Endothelial cell of umbilical vein (primary cell): ENCODE measurements at regions of chr10 and their contacts with region 1.

Region 1: DNA sequence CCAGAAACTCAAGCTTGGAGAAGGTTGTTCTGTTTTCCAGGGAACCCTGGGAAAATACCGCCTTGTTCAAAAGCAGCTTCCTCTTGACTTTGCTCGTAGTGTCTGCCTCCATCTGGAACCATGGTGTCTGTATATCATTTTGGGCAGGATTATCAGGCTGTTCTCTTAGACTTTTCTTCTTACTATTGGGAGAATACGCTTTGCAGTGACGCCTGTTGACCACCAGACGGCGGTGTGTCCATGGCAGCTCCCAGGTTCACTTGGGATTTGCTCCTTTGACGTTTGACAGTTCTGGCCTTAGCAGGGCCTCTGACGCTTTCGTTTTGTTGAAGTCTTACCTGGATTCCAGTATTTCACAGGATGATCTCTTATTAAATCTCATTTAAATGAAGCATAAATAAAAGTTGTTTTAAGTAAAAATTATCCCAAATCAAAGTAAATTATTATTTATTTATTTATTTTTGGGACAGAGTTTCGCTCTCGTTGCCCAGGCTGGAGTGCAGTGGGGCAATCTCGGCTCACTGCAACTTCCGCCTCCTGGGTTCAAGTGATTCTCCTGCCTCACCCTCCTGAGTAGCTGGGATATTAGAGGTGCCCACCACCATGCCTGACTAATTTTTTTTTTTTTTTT is 41.8 kb upstream of the GJD4 start:
- DNase-seq: peak; percentile 78
- H3K4me3 ChIP-seq: no peak overlapping the region
- H3K27ac ChIP-seq: no peak overlapping the region
- H3K4me1 ChIP-seq: peaks cover 12% of the 10 kb centered on the region
- H3K27me3 ChIP-seq: no peaks in the 10 kb centered on the region
- CTCF ChIP-seq: peak; percentile 97 to 100
- POLR2A ChIP-seq: no peak

Region 2: DNA sequence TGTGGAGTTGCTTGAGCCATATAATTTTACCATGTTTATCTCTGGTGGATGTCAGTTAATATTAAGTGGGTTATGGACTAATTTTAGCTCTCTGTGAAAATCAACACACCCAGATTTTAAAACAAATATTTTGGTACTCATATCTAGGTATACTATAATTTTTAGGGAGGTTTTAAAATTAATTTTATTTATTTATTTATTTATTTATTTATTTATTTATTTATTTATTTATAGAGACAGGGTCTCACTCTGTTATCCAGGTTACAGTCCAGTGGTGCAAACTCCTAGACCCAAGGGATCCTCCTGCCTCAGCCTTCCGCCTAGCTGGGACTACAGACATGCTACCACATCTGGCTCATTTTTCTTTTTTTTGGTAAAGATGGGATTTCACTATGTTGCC is 444.0 kb before region 1 on chr10:
- CTCF ChIA-PET with region 1: interaction called, 32 read pairs
- POLR2A ChIA-PET with region 1: no interaction called
- dilution Hi-C with region 1: no loop called
- intact Hi-C with region 1: loop called (anchors 10 kb)
- DNase-seq: no peak
- H3K4me3 ChIP-seq: no peak overlapping the region
- H3K27ac ChIP-seq: no peak overlapping the region
- H3K4me1 ChIP-seq: no peaks in the 10 kb centered on the region
- H3K27me3 ChIP-seq: peaks cover 0 to 2% of the 10 kb centered on the region in 2 experiments
- CTCF ChIP-seq: no peak
- POLR2A ChIP-seq: no peak

Region 3: DNA sequence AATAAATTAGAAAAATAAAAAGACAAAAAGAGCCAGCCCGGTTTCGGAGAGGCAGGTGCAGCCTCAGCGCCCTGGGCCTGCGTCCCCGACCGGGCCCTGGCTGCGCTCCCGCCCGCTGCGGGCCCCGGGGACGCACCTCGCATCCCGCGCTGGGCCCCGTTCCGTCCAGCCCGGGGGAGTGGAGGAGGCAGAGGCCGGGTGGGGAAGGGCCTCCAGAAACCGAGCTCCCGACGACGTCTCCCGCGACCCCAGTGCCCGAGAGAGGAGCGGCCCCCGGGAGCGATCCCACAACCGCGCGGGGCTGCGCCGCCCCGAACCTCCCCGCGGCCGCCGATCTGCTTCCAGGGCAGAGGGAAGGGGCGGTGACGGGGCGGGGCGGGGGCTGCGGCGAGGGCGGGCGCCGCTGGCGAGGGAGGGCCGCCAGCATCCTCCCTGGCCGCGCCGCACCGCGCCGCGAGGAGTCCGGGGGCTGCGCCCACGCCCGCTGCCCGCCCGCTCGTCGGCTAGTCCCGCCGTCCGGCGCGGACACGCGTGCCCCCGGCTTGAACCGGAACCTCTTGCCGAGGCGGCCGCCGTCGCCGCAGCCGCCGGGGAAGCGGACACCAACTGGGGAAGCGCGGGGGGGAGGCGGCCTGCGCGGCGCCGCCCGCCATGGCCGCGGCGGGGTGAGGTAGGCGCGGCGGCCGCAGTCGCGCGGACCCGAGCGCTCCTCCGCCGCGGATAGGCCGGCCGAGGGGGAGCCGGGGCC is 227.1 kb before region 1 on chr10 and contains the start of gene CCNY:
- CTCF ChIA-PET with region 1: interaction called, 3 read pairs
- POLR2A ChIA-PET with region 1: no interaction called
- dilution Hi-C with region 1: no loop called
- intact Hi-C with region 1: loop called (anchors 5 kb)
- DNase-seq: peak; percentile 67
- H3K4me3 ChIP-seq: peak within 1 kb of the TSS; percentile 72 to 97 (median 94)
- H3K27ac ChIP-seq: peak within 1 kb of the TSS; percentile 63
- H3K4me1 ChIP-seq: peaks cover 45% of the 10 kb centered on the region
- H3K27me3 ChIP-seq: no peaks in the 10 kb centered on the region
- CTCF ChIP-seq: no peak
- POLR2A ChIP-seq: peak; percentile 62
- total RNA-seq, gene CCNY: 99.3 and 107 TPM in 2 replicates

Region 4: GRCh38 chr10:35421553-35422178 is 141.7 kb before region 1 on chr10:
- CTCF ChIA-PET with region 1: interaction called, 13 read pairs
- POLR2A ChIA-PET with region 1: no interaction called
- dilution Hi-C with region 1: no loop called
- intact Hi-C with region 1: loop called (anchors 5 kb)
- DNase-seq: peak; percentile 92
- H3K4me3 ChIP-seq: no peak overlapping the region
- H3K27ac ChIP-seq: peak overlapping the region; percentile 96
- H3K4me1 ChIP-seq: peaks cover 73% of the 10 kb centered on the region
- H3K27me3 ChIP-seq: no peaks in the 10 kb centered on the region
- CTCF ChIP-seq: no peak
- POLR2A ChIP-seq: peak; percentile 50

Region 5: GRCh38 chr10:35613597-35614226 is 50.3 kb after region 1 on chr10:
- CTCF ChIA-PET with region 1: interaction called, 14 read pairs
- POLR2A ChIA-PET with region 1: no interaction called
- dilution Hi-C with region 1: no loop called
- intact Hi-C with region 1: no loop called
- DNase-seq: peak; percentile 44
- H3K4me3 ChIP-seq: no peak overlapping the region
- H3K27ac ChIP-seq: no peak overlapping the region
- H3K4me1 ChIP-seq: no peaks in the 10 kb centered on the region
- H3K27me3 ChIP-seq: peaks cover 19 to 22% of the 10 kb centered on the region in 2 experiments
- CTCF ChIP-seq: peak; percentile 30 to 46
- POLR2A ChIP-seq: no peak

Region 6: DNA sequence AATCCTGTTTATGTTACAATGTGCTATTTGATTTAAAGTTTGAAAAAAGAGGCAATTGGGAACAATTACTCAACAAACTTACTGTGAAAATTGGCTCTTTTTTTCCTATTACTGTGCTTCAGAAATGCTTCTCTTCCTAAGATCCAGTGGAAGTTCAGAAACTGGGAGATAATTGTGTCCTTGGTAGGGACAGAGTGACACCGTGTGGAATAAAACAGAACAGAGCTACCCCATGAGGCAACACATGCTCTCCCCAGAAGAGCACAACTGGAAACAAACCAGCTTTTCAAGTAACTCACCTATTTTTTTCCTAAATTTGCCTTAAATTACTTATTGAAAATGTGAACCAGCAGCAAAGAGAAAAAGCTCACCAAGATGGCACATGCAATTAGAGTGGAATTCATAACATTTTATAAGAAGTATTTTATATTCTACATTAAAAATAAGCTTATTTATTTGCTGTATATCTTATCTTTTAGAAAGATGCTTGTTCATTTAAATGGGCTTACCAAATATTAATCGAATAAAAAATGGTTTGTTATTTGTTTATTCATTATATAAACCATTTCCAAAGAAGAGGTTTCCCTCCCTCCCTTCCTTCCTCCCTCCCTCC is 1216.0 kb after region 1 on chr10:
- CTCF ChIA-PET with region 1: interaction called, 33 read pairs
- POLR2A ChIA-PET with region 1: no interaction called
- dilution Hi-C with region 1: no loop called
- intact Hi-C with region 1: loop called (anchors 1 kb)
- DNase-seq: peak; percentile 87
- H3K4me3 ChIP-seq: no peak overlapping the region
- H3K27ac ChIP-seq: no peak overlapping the region
- H3K4me1 ChIP-seq: no peaks in the 10 kb centered on the region
- H3K27me3 ChIP-seq: no peaks in the 10 kb centered on the region
- CTCF ChIP-seq: peak; percentile 57 to 64
- POLR2A ChIP-seq: no peak